ENCODE measurements at regions of chr20 and their contacts with region 1.

Region 1: DNA sequence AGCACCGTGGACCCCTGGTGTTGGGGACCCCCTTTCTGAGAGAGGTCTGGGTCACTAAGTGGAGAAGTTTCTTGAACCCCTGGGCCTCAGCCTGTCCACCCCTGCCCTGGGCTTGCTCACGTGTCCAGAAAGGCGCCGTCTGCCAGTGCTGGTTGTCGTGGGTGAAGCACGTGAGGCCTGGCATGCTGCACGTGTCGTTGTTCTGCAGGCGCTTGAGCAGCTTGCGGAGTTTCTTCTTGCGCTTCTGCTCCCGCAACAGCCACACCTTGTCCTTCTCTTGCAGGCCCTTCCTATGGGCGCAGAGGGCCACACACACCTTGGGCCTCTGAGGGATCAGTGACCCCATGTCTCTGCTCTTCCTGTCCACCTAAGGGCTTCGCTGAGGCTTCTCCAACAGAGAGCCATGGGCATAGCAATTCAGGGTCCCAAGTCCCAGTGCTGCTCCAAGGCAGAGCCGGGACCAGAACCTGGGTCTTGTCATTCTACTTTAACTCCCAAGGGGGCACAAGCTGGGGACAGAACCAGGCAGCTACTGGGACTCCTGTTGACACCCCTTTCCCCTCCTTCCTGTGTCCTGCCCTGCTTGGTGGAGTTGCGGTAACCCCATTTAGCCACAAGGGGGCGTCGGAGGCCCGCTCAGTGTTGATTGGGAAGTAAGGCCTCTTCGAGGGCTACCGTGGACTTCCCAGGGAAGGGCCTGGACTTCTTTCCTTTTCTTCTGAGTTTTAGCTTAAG is 121.8 kb downstream of the SULF2 start:
- DNase-seq: no peak
- H3K4me3 ChIP-seq: no peak overlapping the region
- H3K27me3 ChIP-seq: no peaks in the 10 kb centered on the region
- CTCF ChIP-seq: peak; percentile 96

Region 2: DNA sequence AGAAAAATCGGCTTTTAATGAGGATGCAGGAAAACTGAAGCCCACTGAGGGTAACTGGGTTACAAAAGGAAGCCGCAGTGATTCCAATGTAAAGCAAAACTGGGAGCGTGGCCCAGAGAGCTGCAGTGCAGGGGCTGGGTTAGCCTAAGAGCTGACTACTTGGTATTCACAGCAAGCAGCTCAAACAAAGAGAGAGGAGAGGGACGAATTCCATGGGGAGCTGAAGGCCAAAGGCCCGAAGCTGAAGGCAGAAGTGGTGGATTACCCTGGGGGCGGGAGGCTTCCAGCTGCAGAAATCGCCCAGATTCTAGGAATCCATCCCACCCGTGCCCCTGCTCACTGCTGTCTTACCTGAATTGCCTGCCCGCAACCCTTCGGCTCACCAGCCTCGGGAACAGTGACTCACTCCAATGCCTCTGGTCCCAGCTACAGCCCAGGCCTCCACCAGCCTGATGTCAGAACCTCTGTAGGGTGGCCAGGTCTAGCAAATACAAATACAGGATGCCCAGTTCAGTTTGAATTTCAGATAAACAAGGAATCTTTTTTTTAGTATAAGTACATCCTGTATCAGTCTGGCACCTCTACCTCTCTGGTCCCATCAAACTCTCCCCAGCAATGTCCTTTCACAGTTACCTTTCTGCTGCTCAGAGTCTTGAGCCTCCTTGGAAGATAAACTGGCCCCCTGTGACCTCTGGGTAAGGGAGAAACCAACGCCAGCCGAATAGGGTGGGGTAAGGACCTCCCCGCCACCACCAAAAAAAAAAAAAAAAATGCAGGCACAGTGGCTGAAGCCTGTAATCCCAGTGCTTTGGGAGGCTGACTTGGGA is 292.4 kb before region 1 on chr20:
- CTCF ChIA-PET with region 1: no interaction called
- POLR2A ChIA-PET with region 1: no interaction called
- DNase-seq: no peak
- H3K4me3 ChIP-seq: no peak overlapping the region
- H3K27me3 ChIP-seq: no peaks in the 10 kb centered on the region
- CTCF ChIP-seq: no peak

Region 3: DNA sequence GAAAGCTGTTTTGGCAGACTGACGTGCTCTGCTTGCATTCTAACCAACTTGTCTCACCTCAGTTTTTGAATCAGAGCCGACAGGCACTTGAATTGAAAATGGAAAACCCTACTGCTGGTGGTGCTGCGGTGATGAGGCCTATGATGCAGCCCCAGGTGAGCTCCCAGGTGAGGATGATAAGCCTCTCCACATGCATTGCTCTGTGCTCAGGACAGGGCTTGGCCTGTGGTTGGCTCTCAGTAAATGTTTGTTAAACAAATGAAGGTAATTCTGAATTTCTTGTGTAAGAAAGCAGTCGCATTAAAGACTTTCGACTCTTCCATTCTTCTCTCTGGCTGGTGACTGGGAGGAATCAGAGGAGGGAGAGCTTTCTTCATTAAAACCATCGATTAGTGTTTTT is 14.6 kb before region 1 on chr20:
- CTCF ChIA-PET with region 1: interaction called, 18 read pairs
- POLR2A ChIA-PET with region 1: no interaction called
- DNase-seq: no peak
- H3K4me3 ChIP-seq: no peak overlapping the region
- H3K27me3 ChIP-seq: no peaks in the 10 kb centered on the region
- CTCF ChIP-seq: no peak

Region 4: GRCh38 chr20:47778398-47779338 is 115.2 kb after region 1 on chr20:
- CTCF ChIA-PET with region 1: interaction called, 13 read pairs
- POLR2A ChIA-PET with region 1: no interaction called
- DNase-seq: no peak
- H3K4me3 ChIP-seq: no peak overlapping the region
- H3K27me3 ChIP-seq: peaks cover 10% of the 10 kb centered on the region
- CTCF ChIP-seq: no peak

Region 5: DNA sequence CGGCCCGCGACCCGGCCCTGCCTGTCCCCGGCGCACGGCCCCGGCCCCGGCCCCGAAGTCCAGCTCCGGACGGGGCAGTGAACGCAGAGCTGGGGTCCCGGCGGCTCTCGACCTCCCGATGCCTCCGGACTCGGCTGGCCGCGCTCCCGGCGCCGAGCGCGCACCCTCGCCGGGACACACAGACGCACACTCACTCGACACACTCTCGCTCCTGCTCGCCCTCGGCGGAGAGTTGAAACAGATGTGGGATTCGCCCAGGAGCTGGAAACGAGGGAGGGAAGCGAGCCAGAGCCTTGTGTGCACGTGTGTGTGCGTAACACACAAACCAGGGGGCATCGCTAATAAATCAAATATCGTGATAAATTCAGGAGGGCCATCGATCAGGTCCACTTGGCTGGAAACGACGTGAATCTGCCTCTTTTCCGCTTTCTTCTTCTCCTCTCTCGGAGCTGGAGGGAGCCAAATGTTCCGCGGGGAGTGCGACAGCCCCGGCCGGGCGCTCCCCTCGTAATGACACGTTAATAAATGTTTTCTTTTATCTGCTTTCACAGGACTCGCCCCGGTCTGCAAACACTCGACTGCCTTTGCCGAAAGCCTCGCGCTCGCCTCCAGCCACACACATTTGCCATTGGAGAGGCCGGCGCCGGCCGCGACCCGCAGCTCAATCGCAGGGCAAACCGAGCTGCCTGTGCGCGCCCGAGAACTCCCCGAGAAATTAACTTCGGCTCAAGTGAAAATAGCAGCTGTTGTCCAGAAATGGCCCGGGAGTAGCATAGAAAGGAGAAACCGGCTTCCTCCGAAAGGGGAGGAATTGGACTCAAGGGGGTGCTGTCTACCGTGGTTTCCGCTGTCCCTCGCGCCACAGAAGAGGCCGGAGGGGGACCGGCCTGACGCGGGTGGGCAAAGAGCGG is 122.6 kb after region 1 on chr20:
- CTCF ChIA-PET with region 1: interaction called, 37 read pairs
- POLR2A ChIA-PET with region 1: no interaction called
- DNase-seq: no peak
- H3K4me3 ChIP-seq: peak overlapping the region; percentile 59
- H3K27me3 ChIP-seq: peaks cover 10% of the 10 kb centered on the region
- CTCF ChIP-seq: peak; percentile 80

Region 6: DNA sequence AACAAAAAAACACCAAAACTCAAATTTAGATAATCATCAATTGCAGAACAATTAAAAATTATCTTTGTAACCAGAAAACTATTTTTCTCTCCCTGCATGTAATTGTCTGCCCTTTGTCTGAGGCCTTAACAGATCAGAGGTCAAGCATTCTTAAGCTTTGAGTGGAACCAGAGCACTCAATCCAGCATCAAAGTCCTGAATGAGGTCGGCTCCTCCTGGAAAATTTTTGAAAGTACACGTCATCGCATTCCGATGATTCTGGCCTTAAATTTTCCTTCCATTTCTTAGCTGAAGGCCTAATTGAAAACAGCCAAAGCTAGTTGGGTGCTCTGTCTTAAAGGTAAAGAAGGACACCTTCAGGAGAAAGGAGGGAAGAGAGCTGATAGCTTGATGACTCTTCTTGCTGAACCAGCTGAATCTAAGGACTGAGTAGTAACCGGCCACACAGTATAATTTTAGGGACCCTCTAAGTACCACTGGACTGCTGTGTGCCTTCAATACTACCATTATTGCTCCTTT is 632.0 kb after region 1 on chr20:
- CTCF ChIA-PET with region 1: interaction called, 10 read pairs
- POLR2A ChIA-PET with region 1: no interaction called
- DNase-seq: peak; percentile 90
- H3K4me3 ChIP-seq: no peak overlapping the region
- H3K27me3 ChIP-seq: no peaks in the 10 kb centered on the region
- CTCF ChIP-seq: peak; percentile 50

Measured in BJ (cell line).